PC-3 (cell line): ENCODE measurements at regions of chr15 and their contacts with region 1.

Region 1: DNA sequence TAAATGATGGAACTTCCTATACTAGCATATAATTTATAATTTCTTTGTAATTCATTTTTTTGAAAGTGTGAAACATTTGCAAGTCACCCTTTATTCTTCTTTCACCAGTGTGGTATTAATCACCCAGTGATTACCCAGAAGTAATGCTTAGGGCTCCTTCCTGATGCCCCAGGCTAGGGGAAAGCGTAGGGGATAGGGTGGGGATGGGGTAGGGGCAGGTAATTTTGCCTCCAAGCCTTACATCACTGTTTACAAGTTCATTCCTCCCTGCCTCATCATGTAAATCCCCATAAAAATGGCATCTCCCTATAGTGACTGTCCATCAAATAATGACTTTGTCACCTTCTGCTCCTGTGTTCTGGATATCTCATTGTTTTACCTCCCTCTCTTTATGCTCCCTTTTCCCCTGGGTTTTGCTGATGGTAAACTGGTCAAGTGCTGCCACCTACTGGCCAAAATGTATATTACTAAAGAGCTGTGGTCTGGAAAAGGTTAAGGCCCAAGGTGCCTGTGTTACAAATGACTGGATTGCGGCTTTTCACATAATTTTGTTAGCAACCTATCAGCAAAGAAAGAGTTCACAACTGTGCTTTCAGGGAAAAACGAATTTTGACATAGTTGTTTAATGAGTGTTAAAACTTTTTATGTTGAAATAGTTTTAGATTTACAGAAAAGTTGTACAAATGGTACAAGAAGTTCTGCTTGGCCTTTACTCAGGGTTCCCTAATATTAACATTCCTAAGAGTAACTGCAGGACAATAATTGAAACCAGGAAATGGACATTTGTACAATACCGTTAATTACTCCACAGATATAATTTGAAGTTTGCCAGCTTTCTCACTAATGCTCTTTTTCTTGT is 54.7 kb downstream of the ONECUT1 start:
- DNase-seq: peak; percentile 90
- ATAC-seq: peak; percentile 91
- H3K4me3 ChIP-seq: no peak overlapping the region
- H3K27ac ChIP-seq: no peak overlapping the region
- H3K4me1 ChIP-seq: no peaks in the 10 kb centered on the region
- H3K27me3 ChIP-seq: no peaks in the 10 kb centered on the region
- CTCF ChIP-seq: peak; percentile 87

Region 2: DNA sequence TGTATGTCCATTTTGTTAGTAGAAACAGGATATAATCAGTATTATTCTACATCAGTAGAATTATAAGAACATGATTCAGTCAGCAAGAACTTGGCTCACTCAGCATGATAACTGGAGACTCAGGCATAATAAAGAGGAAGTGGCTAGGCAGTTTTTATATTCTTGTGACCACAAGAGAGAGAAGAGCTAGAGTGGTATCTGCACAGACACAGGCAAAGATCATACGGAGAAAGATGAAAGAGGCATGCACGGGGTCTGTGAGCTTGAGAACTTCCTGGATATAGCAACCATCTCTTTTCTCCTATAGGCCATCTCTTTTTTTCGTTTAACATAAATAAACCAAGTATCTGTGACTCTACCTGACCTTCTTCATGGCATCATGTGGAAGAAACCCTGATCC is 253.5 kb before region 1 on chr15:
- CTCF ChIA-PET with region 1: no interaction called
- POLR2A ChIA-PET with region 1: no interaction called
- intact Hi-C with region 1: loop called (anchors 10 kb)
- DNase-seq: peak; percentile 69
- ATAC-seq: peak; percentile 80
- H3K4me3 ChIP-seq: no peak overlapping the region
- H3K27ac ChIP-seq: peak overlapping the region; percentile 12; the same call in 1 of the 2 replicates
- H3K4me1 ChIP-seq: peaks cover 28% of the 10 kb centered on the region
- H3K27me3 ChIP-seq: no peaks in the 10 kb centered on the region
- CTCF ChIP-seq: no peak

Region 3: DNA sequence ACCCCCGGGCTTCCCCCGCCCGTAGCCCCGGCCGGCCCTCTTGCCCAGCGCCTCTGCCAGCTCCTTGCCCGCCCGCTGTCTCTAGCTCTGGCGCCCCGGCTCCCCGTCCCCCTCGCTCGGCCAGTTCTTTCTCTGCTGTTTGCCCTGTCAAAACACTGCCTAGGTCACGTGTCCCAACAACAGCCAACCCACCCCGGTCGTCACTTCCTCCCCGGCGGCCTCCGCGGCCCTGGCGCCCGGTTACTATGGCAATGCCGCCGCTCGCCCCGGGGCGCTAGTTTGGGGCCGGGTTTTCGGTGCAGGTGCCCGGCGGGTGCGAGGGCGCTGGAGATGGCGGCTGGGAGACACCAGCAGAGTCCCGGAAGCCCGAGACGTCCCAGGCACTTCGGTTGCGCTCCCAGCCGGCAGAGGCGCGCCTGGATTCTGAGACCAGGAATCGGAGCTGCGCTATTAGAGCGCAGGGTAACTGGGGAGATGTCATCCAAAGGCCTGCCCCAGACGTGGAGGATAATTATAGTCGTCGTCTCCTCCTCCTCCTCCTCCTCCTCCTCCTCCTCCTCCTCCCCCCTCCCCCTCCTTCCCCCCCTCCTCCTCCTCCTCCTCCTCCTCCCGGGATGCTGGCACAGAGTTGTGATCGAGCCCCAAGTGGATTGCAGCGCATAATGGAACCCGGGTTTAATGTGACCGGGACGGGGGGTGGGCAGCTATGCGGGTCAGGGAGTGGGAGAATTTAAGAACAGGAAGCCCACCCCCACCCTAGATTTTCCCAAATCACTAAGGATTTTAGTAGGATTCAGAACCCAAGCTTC is 56.0 kb before region 1 on chr15 and contains the start of gene ATOSA:
- CTCF ChIA-PET with region 1: no interaction called
- POLR2A ChIA-PET with region 1: no interaction called
- intact Hi-C with region 1: loop called (anchors 1 kb)
- DNase-seq: peak; percentile 73
- ATAC-seq: peak; percentile 78
- H3K4me3 ChIP-seq: peak within 1 kb of the TSS; percentile 80
- H3K27ac ChIP-seq: peak within 1 kb of the TSS; percentile 73
- H3K4me1 ChIP-seq: peaks cover 19% of the 10 kb centered on the region; the same call in 1 of the 2 replicates
- H3K27me3 ChIP-seq: no peaks in the 10 kb centered on the region
- CTCF ChIP-seq: no peak
- total RNA-seq, gene ATOSA: 6.5 and 8.7 TPM in 2 replicates

Region 4: DNA sequence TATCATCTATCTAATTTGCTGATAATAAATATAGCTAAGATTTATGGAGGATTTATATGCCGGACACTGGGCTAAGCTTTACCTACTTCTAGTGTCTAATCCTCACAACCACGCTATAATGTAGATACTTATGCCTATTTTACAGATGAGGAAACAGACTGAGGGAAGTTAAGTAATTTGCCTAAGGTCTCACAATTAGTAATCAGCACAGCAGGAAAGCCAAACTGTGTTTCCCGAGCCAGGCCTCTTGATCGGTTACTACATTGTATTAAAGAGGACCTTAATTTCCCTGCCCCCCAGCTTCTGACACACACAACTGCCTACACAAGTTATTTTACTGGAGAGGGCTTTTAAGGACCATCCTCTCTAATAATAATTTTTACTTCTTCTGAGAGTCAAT is 13.8 kb after region 1 on chr15:
- CTCF ChIA-PET with region 1: no interaction called
- POLR2A ChIA-PET with region 1: no interaction called
- intact Hi-C with region 1: no loop called
- DNase-seq: no peak
- ATAC-seq: no peak
- H3K4me3 ChIP-seq: no peak overlapping the region
- H3K27ac ChIP-seq: no peak overlapping the region
- H3K4me1 ChIP-seq: no peaks in the 10 kb centered on the region
- H3K27me3 ChIP-seq: peaks cover 30% of the 10 kb centered on the region
- CTCF ChIP-seq: no peak

Region 5: GRCh38 chr15:52893338-52893737 is 157.9 kb after region 1 on chr15:
- CTCF ChIA-PET with region 1: no interaction called
- POLR2A ChIA-PET with region 1: no interaction called
- intact Hi-C with region 1: no loop called
- DNase-seq: no peak
- ATAC-seq: no peak
- H3K4me3 ChIP-seq: no peak overlapping the region
- H3K27ac ChIP-seq: no peak overlapping the region
- H3K4me1 ChIP-seq: no peaks in the 10 kb centered on the region
- H3K27me3 ChIP-seq: peaks cover 19% of the 10 kb centered on the region; the same call in 1 of the 2 replicates
- CTCF ChIP-seq: no peak